CD4-positive, alpha-beta memory T cell (primary cell): ENCODE measurements at regions of chr20 and their contacts with region 1.

Region 1: GRCh38 chr20:13546497-13547131 is 92.1 kb downstream of the TASP1 start:
- DNase-seq: peak in 4 of 5 donors; percentile 32 to 45 (median 39)
- H3K4me3 ChIP-seq: no peak overlapping the region
- H3K4me3 Mint-ChIP-seq: no peak overlapping the region
- H3K27ac ChIP-seq: no peak overlapping the region
- H3K27ac Mint-ChIP-seq: peak overlapping the region in 1 of 7 donors; percentile 3
- H3K4me1 ChIP-seq: no peaks in the 10 kb centered on the region
- H3K4me1 Mint-ChIP-seq: peaks cover 0 to 2% (median 0%) of the 10 kb centered on the region in 4 donors
- H3K27me3 ChIP-seq: no peaks in the 10 kb centered on the region
- H3K27me3 Mint-ChIP-seq: no peaks in the 10 kb centered on the region

Region 2: DNA sequence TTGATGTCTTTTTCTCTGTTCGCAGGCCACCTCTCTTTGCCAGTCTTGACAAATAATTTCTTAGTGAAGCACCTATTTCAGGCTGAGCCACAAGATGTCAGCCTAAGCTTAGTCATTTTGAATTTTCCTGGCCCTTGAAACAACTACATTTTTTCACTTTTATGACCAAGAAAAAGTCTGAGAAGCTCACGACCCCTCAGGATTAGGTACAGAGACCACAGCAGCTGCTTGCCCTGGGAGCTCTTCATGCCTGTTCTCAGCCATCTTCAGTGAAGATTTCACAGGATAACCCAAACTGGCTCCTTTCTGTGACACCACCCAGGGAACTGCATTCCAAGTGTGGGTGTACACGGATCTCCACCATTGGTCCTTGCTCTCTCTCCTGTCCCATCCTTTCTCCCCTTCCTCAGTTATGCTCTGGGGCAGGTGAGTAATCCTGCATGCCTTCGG is 576.2 kb before region 1 on chr20:
- CTCF ChIA-PET with region 1: no interaction called
- POLR2A ChIA-PET with region 1: no interaction called
- intact Hi-C with region 1: loop called (anchors 10 kb)
- DNase-seq: peak in 3 of 5 donors; percentile 2 to 22 (median 4)
- H3K4me3 ChIP-seq: no peak overlapping the region
- H3K4me3 Mint-ChIP-seq: no peak overlapping the region
- H3K27ac ChIP-seq: no peak overlapping the region
- H3K27ac Mint-ChIP-seq: no peak overlapping the region
- H3K4me1 ChIP-seq: no peaks in the 10 kb centered on the region
- H3K4me1 Mint-ChIP-seq: no peaks in the 10 kb centered on the region
- H3K27me3 ChIP-seq: no peaks in the 10 kb centered on the region
- H3K27me3 Mint-ChIP-seq: peaks cover 0 to 2% of the 10 kb centered on the region in 2 donors

Region 3: DNA sequence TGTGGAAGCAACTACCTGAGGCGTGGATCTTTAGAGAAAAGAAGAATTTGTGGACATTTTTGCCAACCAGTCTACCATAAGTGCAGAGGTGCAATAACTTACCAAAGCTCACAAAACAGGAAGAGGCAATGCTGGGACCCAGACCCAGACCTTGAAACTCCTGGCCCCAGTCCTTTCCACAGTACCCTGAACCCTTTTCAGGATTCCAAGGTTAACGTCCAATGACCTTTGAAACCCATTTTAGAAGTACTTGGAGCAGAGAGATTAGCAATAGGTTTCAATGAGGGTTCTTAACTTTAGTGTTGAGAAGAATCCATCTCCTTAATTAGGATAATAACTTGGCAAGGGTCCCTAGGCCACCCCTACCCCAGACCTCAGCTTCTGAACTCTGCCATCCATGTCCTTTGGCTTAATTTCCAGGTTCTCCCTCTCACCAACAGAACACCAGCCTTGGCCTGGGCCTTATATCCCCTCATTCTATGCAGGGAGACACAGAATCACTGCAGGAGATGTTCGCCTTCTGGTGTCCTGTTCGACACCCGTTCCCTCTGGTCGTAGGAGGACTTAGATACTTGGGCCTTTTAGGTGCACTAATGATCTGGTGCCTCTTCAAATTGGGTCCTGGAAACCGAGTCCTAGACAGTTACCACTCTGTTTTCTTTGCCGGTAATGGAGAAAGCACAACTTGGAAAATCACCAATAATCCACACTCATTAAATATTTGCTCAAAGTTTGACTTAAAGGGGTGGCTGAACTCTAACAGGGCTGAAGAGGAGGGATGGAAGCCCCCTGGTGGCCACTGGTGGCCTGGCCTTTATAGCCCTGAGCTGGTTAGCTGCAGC is 284.9 kb before region 1 on chr20:
- CTCF ChIA-PET with region 1: interaction called, 3 read pairs
- POLR2A ChIA-PET with region 1: no interaction called
- intact Hi-C with region 1: loop called (anchors 10 kb)
- DNase-seq: peak; percentile 58 to 66 (median 63)
- H3K4me3 ChIP-seq: no peak overlapping the region
- H3K4me3 Mint-ChIP-seq: no peak overlapping the region
- H3K27ac ChIP-seq: no peak overlapping the region
- H3K27ac Mint-ChIP-seq: peak overlapping the region in 1 of 7 donors; percentile 54
- H3K4me1 ChIP-seq: no peaks in the 10 kb centered on the region
- H3K4me1 Mint-ChIP-seq: peaks cover 7 to 14% (median 12%) of the 10 kb centered on the region in 4 donors
- H3K27me3 ChIP-seq: no peaks in the 10 kb centered on the region
- H3K27me3 Mint-ChIP-seq: peaks cover 0 to 1% of the 10 kb centered on the region in 2 donors

Region 4: DNA sequence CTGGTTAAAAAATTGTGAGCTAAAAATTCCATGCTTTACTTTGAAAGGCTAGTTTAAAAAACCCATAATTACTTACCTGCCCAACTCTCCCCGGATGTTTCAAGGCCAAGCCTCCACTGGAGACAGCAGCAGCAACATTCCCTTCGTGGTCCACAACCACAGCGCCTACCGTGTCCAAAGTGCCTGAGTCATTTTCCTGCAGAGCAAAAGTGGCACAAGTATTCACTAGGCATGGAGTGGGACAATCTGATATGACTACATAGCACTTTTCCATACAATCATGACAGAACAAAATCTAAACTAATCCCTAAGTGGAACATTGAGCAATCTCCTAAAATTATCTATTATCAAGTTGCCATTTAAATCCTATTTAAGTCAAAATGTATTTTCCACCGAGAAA is 12.7 kb before region 1 on chr20:
- CTCF ChIA-PET with region 1: interaction called, 44 read pairs
- POLR2A ChIA-PET with region 1: no interaction called
- intact Hi-C with region 1: no loop called
- DNase-seq: no peak
- H3K4me3 ChIP-seq: no peak overlapping the region
- H3K4me3 Mint-ChIP-seq: no peak overlapping the region
- H3K27ac ChIP-seq: no peak overlapping the region
- H3K27ac Mint-ChIP-seq: peak overlapping the region in 1 of 7 donors; percentile 77
- H3K4me1 ChIP-seq: no peaks in the 10 kb centered on the region
- H3K4me1 Mint-ChIP-seq: no peaks in the 10 kb centered on the region
- H3K27me3 ChIP-seq: no peaks in the 10 kb centered on the region
- H3K27me3 Mint-ChIP-seq: no peaks in the 10 kb centered on the region

Region 5: DNA sequence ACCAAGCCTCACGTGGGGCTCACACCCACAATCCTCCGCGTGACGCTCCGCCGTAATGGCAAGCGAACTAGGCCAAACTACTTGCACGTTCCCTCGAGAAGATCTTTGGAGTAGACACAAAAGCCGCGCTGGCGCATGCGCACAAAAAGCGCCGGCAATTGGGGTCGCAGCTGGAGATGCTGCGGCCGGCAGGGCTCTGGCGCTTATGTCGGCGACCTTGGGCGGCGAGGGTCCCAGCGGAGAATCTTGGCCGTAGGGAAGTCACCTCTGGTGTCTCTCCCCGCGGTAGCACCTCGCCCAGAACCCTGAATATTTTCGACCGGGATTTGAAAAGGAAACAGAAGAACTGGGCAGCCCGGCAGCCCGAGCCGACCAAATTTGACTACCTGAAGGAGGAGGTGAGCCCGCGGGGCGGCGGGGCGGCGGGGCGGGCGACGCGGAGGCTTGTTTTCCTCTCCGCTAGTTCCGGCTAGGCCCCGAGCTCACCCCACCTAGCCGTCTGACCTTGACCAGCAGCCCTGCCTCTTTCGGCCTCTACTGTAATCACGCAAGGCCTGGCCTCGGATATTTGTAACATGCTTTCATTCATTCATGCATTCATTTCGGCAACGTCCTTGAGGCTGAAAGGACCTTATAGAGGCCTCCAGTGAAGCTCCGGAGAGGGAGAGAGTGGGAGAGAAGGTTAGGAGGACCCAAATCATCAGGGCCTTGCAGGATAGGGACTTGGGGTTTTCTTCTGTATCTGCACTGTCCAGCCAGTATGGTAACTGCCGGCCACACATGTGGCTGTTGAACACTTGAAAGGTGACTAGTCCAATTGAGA is 238.5 kb after region 1 on chr20 and contains the starts of genes ESF1 and NDUFAF5:
- CTCF ChIA-PET with region 1: interaction called, 3 read pairs
- POLR2A ChIA-PET with region 1: no interaction called
- intact Hi-C with region 1: loop called (anchors 10 kb)
- DNase-seq: peak; percentile 92 to 95 (median 92)
- H3K4me3 ChIP-seq: peak within 1 kb of the TSS; percentile 91 to 97
- H3K4me3 Mint-ChIP-seq: peak within 1 kb of the TSS; percentile 98 to 100 (median 100)
- H3K27ac ChIP-seq: peak within 1 kb of the TSS; percentile 77
- H3K27ac Mint-ChIP-seq: peak within 1 kb of the TSS; percentile 90 to 99 (median 99)
- H3K4me1 ChIP-seq: peaks cover 27% of the 10 kb centered on the region
- H3K4me1 Mint-ChIP-seq: peaks cover 25 to 67% (median 47%) of the 10 kb centered on the region in 4 donors
- H3K27me3 ChIP-seq: no peaks in the 10 kb centered on the region
- H3K27me3 Mint-ChIP-seq: no peaks in the 10 kb centered on the region
- total RNA-seq, gene ESF1: 13.5 to 13.8 TPM
- total RNA-seq, gene NDUFAF5: 23.6 to 26.8 TPM